ENCODE measurements at regions of chr3 and their contacts with region 1.

Region 1: DNA sequence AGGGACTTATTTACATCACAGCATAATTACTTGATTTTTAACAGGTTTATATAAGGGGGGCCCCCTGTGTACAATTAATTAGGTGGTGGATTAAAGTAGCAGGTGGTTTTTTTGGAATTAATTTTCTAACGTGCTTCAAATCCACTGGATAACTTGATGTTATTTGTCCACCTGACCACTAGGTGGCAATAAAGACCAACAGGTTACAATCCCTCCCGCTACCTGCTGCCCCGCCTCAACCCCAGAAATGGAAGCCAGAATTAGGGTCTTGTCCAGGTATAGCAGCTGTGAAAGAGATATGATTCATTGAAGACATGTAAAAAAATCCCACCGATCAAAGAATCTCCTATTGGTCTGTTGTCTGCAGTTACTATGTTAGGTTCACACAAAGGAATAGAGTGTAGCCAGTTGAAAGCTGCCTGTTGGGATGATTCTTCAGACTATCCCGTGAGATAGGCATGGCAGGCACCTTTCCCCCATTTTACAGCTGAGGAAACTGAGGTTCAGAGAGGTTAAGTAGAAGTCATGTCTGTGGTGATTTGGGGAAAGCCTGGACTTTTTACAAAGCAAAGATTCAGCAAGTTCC is 44.0 kb downstream of the MFSD1 start:
- DNase-seq: no peak
- ATAC-seq: peak; percentile 64
- H3K4me3 ChIP-seq: no peak overlapping the region
- H3K27ac ChIP-seq: no peak overlapping the region
- H3K4me1 ChIP-seq: peaks cover 9% of the 10 kb centered on the region
- H3K27me3 ChIP-seq: no peaks in the 10 kb centered on the region
- CTCF ChIP-seq: peak; percentile 59 to 81 (median 68)
- EP300 ChIP-seq: no peak
- POLR2A ChIP-seq: no peak
- RAD21 ChIP-seq: peak; percentile 83

Region 2: DNA sequence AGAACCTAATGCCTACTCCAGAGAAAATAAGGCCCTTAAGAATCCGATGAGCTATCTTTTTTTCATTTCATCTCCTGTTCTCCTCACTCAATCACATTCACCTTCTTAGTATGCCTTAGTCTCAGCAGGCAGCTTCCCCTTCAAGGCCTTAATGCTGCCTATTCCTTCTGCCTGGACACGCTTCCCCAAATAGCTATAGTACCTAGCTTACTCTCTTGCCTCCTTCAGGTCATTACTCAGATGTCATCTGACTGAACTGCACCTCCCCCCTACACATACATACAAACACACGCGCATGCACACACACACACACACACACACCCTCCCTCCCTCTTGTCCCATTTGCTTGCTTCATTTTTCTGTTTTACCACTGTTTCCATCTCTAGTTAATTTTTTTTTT is 466.3 kb before region 1 on chr3:
- CTCF ChIA-PET with region 1: no interaction called
- POLR2A ChIA-PET with region 1: no interaction called
- RAD21 ChIA-PET with region 1: no interaction called
- SMC1A ChIA-PET with region 1: no interaction called
- in situ Hi-C with region 1: no loop called
- intact Hi-C with region 1: no loop called
- DNase-seq: no peak
- ATAC-seq: no peak
- H3K4me3 ChIP-seq: no peak overlapping the region
- H3K27ac ChIP-seq: no peak overlapping the region
- H3K4me1 ChIP-seq: no peaks in the 10 kb centered on the region
- H3K27me3 ChIP-seq: no peaks in the 10 kb centered on the region
- CTCF ChIP-seq: no peak
- EP300 ChIP-seq: no peak
- POLR2A ChIP-seq: no peak
- RAD21 ChIP-seq: no peak

Region 3: GRCh38 chr3:159062734-159063410 is 217.0 kb after region 1 on chr3:
- CTCF ChIA-PET with region 1: interaction called, 4 read pairs
- POLR2A ChIA-PET with region 1: no interaction called
- RAD21 ChIA-PET with region 1: no interaction called
- SMC1A ChIA-PET with region 1: no interaction called
- in situ Hi-C with region 1: no loop called
- intact Hi-C with region 1: loop called (anchors 10 kb)
- DNase-seq: no peak
- ATAC-seq: peak; percentile 36
- H3K4me3 ChIP-seq: no peak overlapping the region
- H3K27ac ChIP-seq: no peak overlapping the region
- H3K4me1 ChIP-seq: no peaks in the 10 kb centered on the region
- H3K27me3 ChIP-seq: no peaks in the 10 kb centered on the region
- CTCF ChIP-seq: no peak
- EP300 ChIP-seq: no peak
- POLR2A ChIP-seq: no peak
- RAD21 ChIP-seq: no peak

Region 4: GRCh38 chr3:159130108-159130507 is 284.2 kb after region 1 on chr3:
- CTCF ChIA-PET with region 1: interaction called, 5 read pairs
- POLR2A ChIA-PET with region 1: no interaction called
- RAD21 ChIA-PET with region 1: no interaction called
- SMC1A ChIA-PET with region 1: interaction called, 3 read pairs
- in situ Hi-C with region 1: no loop called
- intact Hi-C with region 1: loop called (anchors 5 kb)
- DNase-seq: no peak
- ATAC-seq: peak; percentile 36; the same call in 1 of the 3 replicates
- H3K4me3 ChIP-seq: no peak overlapping the region
- H3K27ac ChIP-seq: no peak overlapping the region
- H3K4me1 ChIP-seq: no peaks in the 10 kb centered on the region
- H3K27me3 ChIP-seq: no peaks in the 10 kb centered on the region
- CTCF ChIP-seq: peak; percentile 34 to 62 (median 40); a peak in 5 of 6 replicates
- EP300 ChIP-seq: no peak
- POLR2A ChIP-seq: no peak
- RAD21 ChIP-seq: peak; percentile 67

Region 5: GRCh38 chr3:159252772-159253384 is 407.0 kb after region 1 on chr3:
- CTCF ChIA-PET with region 1: interaction called, 141 read pairs
- POLR2A ChIA-PET with region 1: no interaction called
- RAD21 ChIA-PET with region 1: interaction called, 62 read pairs
- SMC1A ChIA-PET with region 1: interaction called, 41 read pairs
- in situ Hi-C with region 1: loop called (anchors 5 kb)
- intact Hi-C with region 1: no loop called
- DNase-seq: peak; percentile 11
- ATAC-seq: no peak
- H3K4me3 ChIP-seq: no peak overlapping the region
- H3K27ac ChIP-seq: no peak overlapping the region
- H3K4me1 ChIP-seq: no peaks in the 10 kb centered on the region
- H3K27me3 ChIP-seq: no peaks in the 10 kb centered on the region
- CTCF ChIP-seq: peak; percentile 35 to 58 (median 41); a peak in 4 of 6 replicates
- EP300 ChIP-seq: no peak
- POLR2A ChIP-seq: no peak
- RAD21 ChIP-seq: peak; percentile 85

Region 6: DNA sequence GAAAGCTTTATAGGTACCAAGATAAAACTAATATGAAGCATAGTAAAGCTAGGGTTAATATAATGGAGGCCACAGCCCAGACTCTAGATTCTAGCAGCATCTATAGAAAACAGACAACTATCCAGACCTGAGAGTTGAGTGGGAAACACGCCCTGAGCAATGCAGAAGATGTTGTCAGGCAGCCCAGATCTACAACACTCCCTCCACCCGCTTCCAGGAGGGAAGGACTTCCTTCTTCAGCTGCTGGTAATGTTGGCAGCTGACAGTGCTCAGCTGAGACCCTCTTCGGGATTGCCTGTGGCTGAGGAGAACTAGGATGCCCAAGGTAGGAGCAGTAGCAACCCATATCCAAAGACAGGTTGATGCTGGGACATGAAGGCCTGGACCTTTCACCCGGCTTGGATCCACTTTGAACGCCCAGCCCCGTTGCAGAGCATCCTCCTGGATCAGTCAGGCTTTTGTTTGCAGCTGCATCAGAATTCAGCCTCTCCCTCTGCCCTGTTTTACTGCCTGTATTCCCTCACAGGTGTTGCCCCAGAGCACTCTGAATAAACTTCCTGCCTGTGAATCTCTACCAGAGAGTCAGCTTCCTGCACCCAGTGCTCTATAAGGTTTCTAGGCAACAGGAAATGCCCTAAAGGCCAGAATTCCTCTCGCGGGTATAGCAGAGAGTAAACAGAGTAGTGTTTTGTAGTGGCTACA is 968.1 kb after region 1 on chr3:
- CTCF ChIA-PET with region 1: no interaction called
- POLR2A ChIA-PET with region 1: no interaction called
- RAD21 ChIA-PET with region 1: no interaction called
- SMC1A ChIA-PET with region 1: no interaction called
- in situ Hi-C with region 1: loop called (anchors 5 kb)
- intact Hi-C with region 1: no loop called
- DNase-seq: no peak
- ATAC-seq: peak; percentile 28; the same call in 2 of the 3 replicates
- H3K4me3 ChIP-seq: no peak overlapping the region
- H3K27ac ChIP-seq: no peak overlapping the region
- H3K4me1 ChIP-seq: no peaks in the 10 kb centered on the region
- H3K27me3 ChIP-seq: no peaks in the 10 kb centered on the region; a peak in 1 of 4 replicates
- CTCF ChIP-seq: no peak
- EP300 ChIP-seq: no peak
- POLR2A ChIP-seq: no peak
- RAD21 ChIP-seq: no peak

Measured in GM12878 (cell line).